ENCODE measurements at regions of chr3 and their contacts with region 1.

Region 1: GRCh38 chr3:30693470-30694120 is 87.2 kb downstream of the TGFBR2 start:
- DNase-seq: peak in 1 of 3 donors; percentile 71
- ATAC-seq: peak; percentile 80 to 83
- H3K4me3 ChIP-seq: no peak overlapping the region
- H3K27ac ChIP-seq: no peak overlapping the region
- H3K4me1 ChIP-seq: peaks cover 26% of the 10 kb centered on the region
- H3K27me3 ChIP-seq: no peaks in the 10 kb centered on the region

Region 2: GRCh38 chr3:30124435-30125395 is 568.9 kb before region 1 on chr3:
- intact Hi-C with region 1: loop called in 2 of 4 experiments (anchors 10 kb)
- DNase-seq: peak in 1 of 3 donors; percentile 40
- ATAC-seq: no peak
- H3K4me3 ChIP-seq: no peak overlapping the region
- H3K27ac ChIP-seq: no peak overlapping the region
- H3K4me1 ChIP-seq: no peaks in the 10 kb centered on the region
- H3K27me3 ChIP-seq: no peaks in the 10 kb centered on the region

Region 3: GRCh38 chr3:30319713-30320112 is 373.9 kb before region 1 on chr3:
- intact Hi-C with region 1: loop called in 1 of 4 experiments (anchors 10 kb)
- DNase-seq: peak; percentile 45 to 70 (median 59)
- ATAC-seq: peak; percentile 92 to 93
- H3K4me3 ChIP-seq: no peak overlapping the region
- H3K27ac ChIP-seq: peak overlapping the region; percentile 15
- H3K4me1 ChIP-seq: no peaks in the 10 kb centered on the region
- H3K27me3 ChIP-seq: no peaks in the 10 kb centered on the region

Region 4: DNA sequence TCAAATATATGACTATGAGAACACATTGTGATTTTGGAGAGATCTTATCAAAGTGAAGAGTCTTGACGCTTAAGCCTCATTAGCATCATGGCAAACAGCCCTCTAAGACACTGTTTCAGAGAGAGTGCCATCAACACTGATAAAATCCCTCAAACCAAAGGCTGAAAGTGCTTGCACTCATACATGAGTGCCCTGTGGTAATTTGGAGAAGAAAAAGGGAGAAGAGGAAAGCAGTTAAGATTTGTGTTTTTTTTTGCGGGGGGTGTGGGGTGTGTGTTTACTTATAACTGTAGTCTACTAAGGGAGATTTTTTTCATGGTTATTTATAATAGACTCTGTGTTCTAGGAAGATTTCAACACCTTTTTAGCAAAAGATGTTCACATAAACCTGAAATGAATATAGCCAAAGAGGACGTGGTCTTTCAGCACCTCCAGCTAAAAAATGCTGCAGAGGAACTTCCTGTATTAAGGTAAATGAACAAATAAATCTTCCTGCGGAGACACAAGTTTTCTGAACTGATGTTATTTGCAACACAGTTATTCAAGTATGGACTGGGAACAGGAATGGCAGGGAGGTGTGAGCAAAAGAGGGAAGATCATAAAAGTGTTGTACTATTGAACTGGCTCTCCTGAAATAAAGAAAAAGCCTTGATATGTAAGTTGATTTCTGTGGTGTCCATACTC is 169.1 kb before region 1 on chr3:
- intact Hi-C with region 1: loop called in 1 of 4 experiments (anchors 10 kb)
- DNase-seq: no peak
- ATAC-seq: peak in 1 of 2 donors; percentile 56
- H3K4me3 ChIP-seq: no peak overlapping the region
- H3K27ac ChIP-seq: no peak overlapping the region
- H3K4me1 ChIP-seq: peaks cover 5% of the 10 kb centered on the region
- H3K27me3 ChIP-seq: no peaks in the 10 kb centered on the region

Region 5: DNA sequence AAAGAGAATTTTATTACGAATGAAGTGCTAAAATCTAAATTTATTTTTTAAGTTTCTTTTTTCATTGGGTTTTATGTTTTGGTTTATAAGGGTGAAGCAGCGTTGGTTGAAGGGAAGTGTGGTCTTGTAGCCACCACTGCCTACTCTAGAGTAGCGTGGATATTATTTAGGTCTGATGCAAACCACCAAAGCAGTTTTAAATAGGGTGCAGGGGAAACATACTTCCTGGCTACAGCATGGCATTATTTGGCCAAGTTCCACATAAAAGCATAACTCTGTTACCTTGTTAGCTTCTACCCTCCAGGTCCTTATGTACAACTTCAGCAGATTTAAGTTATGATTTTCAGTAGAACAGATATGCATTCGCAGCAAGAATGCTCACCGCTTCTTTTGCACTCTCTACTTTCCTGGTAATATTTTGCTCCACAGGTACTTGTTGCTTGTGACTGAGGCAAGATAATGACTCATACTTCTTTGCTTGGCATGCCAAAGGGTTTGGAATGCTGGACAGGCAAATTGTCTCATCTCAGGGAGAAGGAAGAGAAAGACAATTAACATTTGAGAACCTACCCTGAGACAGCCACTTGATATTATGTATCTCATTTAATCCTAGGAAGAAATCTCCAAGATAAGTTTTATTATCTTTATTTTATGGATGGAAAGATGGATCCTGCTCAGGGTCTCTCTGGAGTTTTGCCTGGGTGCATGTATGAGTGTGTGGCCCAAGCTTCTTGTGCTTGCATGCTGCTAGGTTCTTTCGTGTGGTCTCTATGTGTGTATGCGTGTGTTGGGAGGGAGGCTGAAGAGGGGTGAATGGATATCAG is 81.8 kb before region 1 on chr3:
- intact Hi-C with region 1: loop called (anchors 5 to 10 kb)
- DNase-seq: no peak
- ATAC-seq: no peak
- H3K4me3 ChIP-seq: peak overlapping the region; percentile 24
- H3K27ac ChIP-seq: peak overlapping the region; percentile 76
- H3K4me1 ChIP-seq: peaks cover 18% of the 10 kb centered on the region
- H3K27me3 ChIP-seq: no peaks in the 10 kb centered on the region

Measured in right cardiac atrium (tissue), 5 donors.